ENCODE measurements at regions of chr16 and their contacts with region 1.

Region 1: DNA sequence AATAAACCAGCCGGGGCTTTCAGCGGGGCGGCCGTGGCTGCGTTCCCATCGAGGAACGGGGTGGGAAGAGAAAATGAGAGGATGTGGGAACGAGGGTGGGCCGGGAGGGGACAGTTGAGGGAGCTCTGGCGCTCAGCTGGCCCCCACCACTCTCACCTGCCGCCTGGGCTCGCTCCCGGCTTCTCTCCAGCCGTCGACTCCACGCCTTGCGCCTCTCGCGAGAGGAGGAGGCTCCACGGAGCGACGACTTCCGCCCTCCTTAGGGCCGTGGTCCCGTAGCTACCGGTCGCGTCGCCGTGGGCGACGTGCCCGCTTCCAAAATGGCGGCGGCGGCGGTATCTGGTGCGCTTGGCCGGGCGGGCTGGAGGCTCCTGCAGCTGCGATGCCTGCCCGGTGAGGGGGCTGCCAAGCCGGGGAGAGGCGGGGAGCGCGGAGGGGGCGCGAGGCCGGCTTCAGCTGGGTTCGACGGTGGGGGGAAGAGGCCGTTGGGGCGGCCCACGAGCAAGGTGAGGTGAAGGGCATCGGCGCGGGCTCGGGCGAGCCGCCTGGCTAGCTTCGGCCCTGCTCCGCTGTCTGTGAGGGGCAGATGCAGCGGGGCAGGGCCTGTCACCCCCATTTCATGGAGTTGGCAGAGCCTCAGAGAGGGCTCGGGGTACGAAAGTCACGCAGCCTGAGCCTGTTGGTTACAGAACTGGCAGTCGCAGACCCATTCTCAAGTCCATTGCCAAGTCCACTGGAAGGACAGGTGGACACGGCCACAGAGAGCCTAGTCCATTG is at the starts of genes CIAPIN1 and COQ9:
- DNase-seq: peak; percentile 95
- H3K4me3 Mint-ChIP-seq: peak within 1 kb of the TSS; percentile 91
- H3K27ac Mint-ChIP-seq: peak within 1 kb of the TSS; percentile 83
- H3K4me1 Mint-ChIP-seq: peaks cover 33% of the 10 kb centered on the region
- H3K27me3 Mint-ChIP-seq: no peaks in the 10 kb centered on the region
- total RNA-seq, gene CIAPIN1: 35.8 to 36.1 TPM
- total RNA-seq, gene COQ9: 28.5 to 29.0 TPM

Region 2: DNA sequence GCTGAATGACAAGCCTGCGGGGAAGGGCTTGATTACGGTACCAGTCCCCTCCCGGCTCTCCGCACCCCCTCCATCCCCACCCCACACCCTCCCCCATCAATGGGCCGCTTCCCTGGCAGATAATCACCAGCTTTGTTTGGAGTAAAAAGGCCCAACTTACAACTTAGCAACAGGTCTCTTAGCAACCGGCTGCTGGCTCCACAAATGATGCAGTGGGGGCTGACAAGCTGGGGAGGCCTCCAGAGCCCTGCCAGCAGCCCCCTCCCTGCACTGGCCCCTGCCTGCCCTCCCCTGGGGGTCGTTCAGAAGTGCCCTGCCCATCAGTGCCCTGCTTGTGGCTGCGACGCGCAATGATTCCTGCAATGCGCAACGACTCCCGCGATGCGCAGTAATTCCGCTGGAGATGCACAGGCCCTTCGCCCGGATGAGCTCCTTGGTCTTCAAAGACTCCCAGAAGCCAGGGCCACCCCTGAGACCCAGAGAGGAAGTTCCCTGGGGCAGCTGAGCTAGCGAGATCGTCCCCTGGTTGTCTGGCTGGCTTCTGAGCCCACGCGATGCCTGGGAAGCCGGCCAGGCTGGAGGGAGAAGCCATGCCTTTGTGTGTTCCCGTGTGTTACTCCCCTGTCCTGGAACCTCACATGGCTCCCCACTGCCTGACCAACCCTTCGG is 331.7 kb before region 1 on chr16:
- CTCF ChIA-PET with region 1: no interaction called
- POLR2A ChIA-PET with region 1: no interaction called
- DNase-seq: no peak
- H3K4me3 Mint-ChIP-seq: no peak overlapping the region
- H3K27ac Mint-ChIP-seq: no peak overlapping the region
- H3K4me1 Mint-ChIP-seq: no peaks in the 10 kb centered on the region
- H3K27me3 Mint-ChIP-seq: no peaks in the 10 kb centered on the region

Region 3: DNA sequence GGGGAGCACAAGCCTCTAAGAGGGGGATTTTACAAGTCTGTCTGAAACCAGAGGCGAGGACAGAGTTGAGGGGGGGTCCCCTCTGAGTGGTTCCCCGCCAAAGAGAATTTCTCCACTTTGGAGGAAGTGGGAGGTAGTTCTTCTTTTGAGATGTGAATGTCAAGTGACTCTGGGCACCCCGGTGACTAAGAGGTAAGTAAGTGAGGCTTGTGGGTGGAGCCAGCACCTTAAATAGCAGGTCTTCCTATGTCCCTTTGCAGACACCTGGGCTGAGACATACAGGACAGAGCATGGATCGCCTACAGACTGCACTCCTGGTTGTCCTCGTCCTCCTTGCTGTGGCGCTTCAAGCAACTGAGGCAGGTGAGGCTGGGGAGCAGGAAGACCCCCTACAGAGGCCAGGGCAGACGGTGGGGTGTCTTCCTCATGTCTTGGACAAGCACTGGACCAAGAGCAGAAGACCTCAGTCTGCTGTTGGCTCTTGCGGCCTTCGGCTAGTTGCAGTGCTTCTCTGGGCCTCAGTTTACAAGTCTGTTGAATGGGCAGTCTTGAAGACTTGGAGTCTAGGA is 88.8 kb before region 1 on chr16 and contains the start of gene CCL22:
- CTCF ChIA-PET with region 1: no interaction called
- POLR2A ChIA-PET with region 1: no interaction called
- DNase-seq: no peak
- H3K4me3 Mint-ChIP-seq: no peak within 1 kb of the TSS
- H3K27ac Mint-ChIP-seq: no peak within 1 kb of the TSS
- H3K4me1 Mint-ChIP-seq: no peaks in the 10 kb centered on the region
- H3K27me3 Mint-ChIP-seq: peaks cover 6% of the 10 kb centered on the region
- total RNA-seq, gene CCL22: 0.10 TPM in 1 of 2 experiments, not detected in the other

Region 4: DNA sequence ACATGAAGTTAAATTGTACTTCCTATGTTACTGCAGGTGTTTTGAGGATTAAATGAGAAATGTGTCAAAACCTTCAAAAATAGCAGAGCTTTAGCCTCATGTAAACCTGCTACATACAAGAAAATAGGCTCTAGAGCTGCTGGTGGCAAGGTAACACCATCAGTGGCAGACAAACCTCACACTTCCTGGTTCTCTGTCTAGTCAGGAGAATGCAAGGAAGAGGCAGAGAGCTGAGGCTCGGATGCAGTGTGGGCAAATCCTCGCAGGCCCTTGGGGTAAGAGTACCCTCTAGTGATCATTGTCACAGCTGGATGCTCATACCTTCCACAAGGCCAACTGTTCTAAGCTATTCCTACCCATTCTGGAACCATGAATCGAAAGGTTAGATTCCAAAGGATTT is 14.4 kb before region 1 on chr16:
- CTCF ChIA-PET with region 1: no interaction called
- POLR2A ChIA-PET with region 1: interaction called, 12 read pairs
- DNase-seq: no peak
- H3K4me3 Mint-ChIP-seq: no peak overlapping the region
- H3K27ac Mint-ChIP-seq: no peak overlapping the region
- H3K4me1 Mint-ChIP-seq: no peaks in the 10 kb centered on the region
- H3K27me3 Mint-ChIP-seq: no peaks in the 10 kb centered on the region

Region 5: GRCh38 chr16:57530104-57530521 is 82.7 kb after region 1 on chr16:
- CTCF ChIA-PET with region 1: no interaction called
- POLR2A ChIA-PET with region 1: interaction called, 10 read pairs
- DNase-seq: peak; percentile 85
- H3K4me3 Mint-ChIP-seq: peak overlapping the region; percentile 60
- H3K27ac Mint-ChIP-seq: peak overlapping the region; percentile 99
- H3K4me1 Mint-ChIP-seq: peaks cover 63% of the 10 kb centered on the region
- H3K27me3 Mint-ChIP-seq: no peaks in the 10 kb centered on the region

Region 6: DNA sequence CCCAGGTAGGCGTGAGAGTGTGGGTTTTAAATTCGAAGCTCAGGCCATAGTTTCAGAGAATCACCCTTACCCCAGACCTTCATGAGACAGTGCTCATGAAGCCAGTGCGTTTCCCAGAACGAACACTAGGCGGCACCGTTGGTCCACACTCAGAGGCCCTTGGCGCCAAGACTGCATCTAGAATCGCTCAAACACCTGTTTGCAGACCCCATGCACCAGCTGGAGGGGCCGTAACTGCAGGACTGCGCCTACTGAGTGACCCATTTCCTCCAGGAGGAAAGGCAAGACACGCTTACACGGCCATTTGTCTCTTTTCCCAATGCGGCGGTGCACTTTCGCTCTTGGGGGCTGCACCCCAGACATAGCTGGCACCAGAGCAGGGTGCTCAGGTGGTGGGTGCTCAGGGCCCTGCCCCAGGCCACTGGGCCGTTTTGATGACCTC is 129.1 kb after region 1 on chr16:
- CTCF ChIA-PET with region 1: no interaction called
- POLR2A ChIA-PET with region 1: no interaction called
- DNase-seq: peak; percentile 87
- H3K4me3 Mint-ChIP-seq: no peak overlapping the region
- H3K27ac Mint-ChIP-seq: peak overlapping the region; percentile 85
- H3K4me1 Mint-ChIP-seq: peaks cover 58% of the 10 kb centered on the region
- H3K27me3 Mint-ChIP-seq: peaks cover 3% of the 10 kb centered on the region

Measured in activated CD4-positive, alpha-beta memory T cell treated with anti-CD3 and anti-CD28 coated beads, Interleukin-2, amount 10 ng/mL, durations not matched to agents 7 days and 5 days (primary cell).